B cell (primary cell): ENCODE measurements at regions of chr11 and their contacts with region 1.

Region 1: DNA sequence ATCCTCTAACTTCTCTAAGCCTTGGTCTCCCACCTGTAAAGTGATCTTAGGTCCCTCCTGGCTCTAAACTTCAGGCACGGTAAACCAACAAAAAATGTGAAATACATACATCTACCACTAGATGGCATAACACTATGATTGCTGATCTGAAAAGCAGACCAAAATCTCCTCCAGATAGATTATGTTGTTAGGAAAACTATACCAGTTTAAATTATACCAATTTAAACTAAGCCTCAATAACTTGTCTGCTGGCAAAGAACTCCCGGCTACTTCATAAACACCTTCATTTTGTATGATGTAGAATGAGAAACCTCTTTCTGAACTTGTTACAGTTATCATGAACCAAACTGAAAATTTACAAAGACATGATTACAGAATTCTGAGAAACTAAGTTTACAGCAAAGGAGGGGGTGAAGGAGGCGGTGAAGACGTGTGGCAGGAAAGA is 85.9 kb downstream of the SBF2 start:
- DNase-seq: peak; percentile 71
- ATAC-seq: peak; percentile 62
- H3K4me3 ChIP-seq: no peak overlapping the region
- H3K4me3 Mint-ChIP-seq: no peak overlapping the region
- H3K27ac ChIP-seq: no peak overlapping the region
- H3K27ac Mint-ChIP-seq: no peak overlapping the region
- H3K4me1 ChIP-seq: no peaks in the 10 kb centered on the region
- H3K4me1 Mint-ChIP-seq: peaks cover 5% of the 10 kb centered on the region
- H3K27me3 ChIP-seq: no peaks in the 10 kb centered on the region
- H3K27me3 Mint-ChIP-seq: no peaks in the 10 kb centered on the region
- CTCF ChIP-seq: peak; percentile 87

Region 2: DNA sequence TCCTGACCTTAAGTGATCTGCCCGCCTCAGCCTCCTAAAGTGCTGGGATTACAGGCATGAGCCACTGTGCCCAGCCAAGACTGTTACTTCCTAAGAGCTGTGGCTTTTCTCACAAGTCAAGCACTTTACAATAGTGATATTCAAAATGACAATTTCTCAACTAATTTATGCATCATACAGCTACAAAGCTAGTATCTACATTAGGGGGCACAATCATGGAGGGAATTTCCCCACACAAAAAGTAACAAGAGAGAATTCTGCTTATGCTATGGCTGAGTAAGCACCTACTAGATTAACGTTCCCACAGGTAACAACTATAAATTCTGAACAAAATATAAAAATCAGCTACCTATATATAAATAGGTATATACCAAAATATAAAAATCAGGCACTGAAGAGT is 13.2 kb after region 1 on chr11:
- CTCF ChIA-PET with region 1: interaction called, 14 read pairs
- POLR2A ChIA-PET with region 1: interaction called, 3 read pairs
- intact Hi-C with region 1: no loop called
- DNase-seq: no peak
- ATAC-seq: no peak
- H3K4me3 ChIP-seq: no peak overlapping the region
- H3K4me3 Mint-ChIP-seq: no peak overlapping the region
- H3K27ac ChIP-seq: no peak overlapping the region
- H3K27ac Mint-ChIP-seq: no peak overlapping the region
- H3K4me1 ChIP-seq: peaks cover 0 to 9% of the 10 kb centered on the region in 2 donors
- H3K4me1 Mint-ChIP-seq: peaks cover 2% of the 10 kb centered on the region
- H3K27me3 ChIP-seq: no peaks in the 10 kb centered on the region
- H3K27me3 Mint-ChIP-seq: no peaks in the 10 kb centered on the region
- CTCF ChIP-seq: no peak

Region 3: DNA sequence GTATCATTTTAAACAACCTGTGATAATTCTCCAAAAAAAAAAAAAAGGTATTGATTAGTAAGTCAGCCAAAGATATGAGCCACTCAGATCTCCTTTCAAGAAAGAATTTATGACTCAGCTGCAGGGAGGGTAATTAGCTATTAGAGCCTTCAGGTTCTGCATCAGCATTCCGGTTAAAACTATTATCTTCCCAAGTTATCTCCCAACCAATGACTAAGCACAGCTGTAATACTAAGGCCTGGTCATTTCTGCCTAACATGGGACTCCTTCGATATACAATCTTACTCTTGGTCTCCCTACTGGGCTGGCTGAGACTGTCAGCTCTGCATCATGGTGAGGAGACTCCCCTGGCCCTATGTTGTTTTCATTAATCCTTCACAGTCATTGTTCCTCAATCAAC is 25.4 kb after region 1 on chr11:
- CTCF ChIA-PET with region 1: no interaction called
- POLR2A ChIA-PET with region 1: no interaction called
- intact Hi-C with region 1: no loop called
- DNase-seq: no peak
- ATAC-seq: no peak
- H3K4me3 ChIP-seq: no peak overlapping the region
- H3K4me3 Mint-ChIP-seq: no peak overlapping the region
- H3K27ac ChIP-seq: no peak overlapping the region
- H3K27ac Mint-ChIP-seq: no peak overlapping the region
- H3K4me1 ChIP-seq: no peaks in the 10 kb centered on the region
- H3K4me1 Mint-ChIP-seq: no peaks in the 10 kb centered on the region
- H3K27me3 ChIP-seq: no peaks in the 10 kb centered on the region
- H3K27me3 Mint-ChIP-seq: peaks cover 4% of the 10 kb centered on the region
- CTCF ChIP-seq: no peak

Region 4: DNA sequence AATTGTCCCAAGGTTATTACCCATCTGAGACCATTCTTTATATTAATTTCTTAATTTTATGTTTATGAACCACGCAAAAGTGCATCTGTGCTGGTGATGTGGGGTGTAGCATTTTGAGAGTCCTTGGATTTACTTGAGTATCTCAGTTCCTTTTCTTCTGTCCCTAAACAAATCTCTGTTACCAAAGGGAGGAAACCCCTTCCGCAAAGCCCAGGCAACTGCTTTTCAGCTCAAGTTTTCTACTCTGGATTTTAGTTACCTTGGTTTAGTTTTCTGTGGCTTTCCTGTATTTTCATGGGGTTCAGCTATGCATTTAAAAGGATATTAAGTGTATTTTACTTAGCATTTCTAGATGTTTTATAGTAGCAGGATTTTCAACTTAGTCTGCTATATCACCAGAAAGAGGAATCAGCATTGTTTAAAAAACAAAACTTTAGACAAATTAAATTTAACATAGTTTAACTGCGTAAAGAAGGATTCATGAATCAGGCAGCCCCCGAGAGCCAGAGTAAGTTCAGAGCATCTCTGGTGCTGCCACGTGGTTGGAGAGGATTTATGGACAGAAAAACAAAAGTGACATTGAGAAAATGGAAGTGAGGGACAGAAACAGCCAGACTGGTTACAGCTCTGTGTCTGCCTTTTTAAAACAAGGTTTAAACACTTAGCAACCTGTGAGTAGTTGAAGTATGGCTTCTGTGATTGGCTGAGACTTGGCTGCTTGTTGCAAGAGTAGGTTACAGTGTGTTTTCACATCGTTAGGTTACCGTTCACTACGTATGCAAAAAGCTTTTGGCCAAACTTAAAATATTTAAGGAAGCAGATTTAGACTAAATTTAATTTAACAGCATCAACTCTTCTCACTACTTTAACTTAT is 106.3 kb after region 1 on chr11:
- CTCF ChIA-PET with region 1: interaction called, 187 read pairs
- POLR2A ChIA-PET with region 1: no interaction called
- intact Hi-C with region 1: no loop called
- DNase-seq: peak; percentile 84
- ATAC-seq: peak; percentile 65
- H3K4me3 ChIP-seq: no peak overlapping the region
- H3K4me3 Mint-ChIP-seq: peak overlapping the region; percentile 40
- H3K27ac ChIP-seq: no peak overlapping the region
- H3K27ac Mint-ChIP-seq: no peak overlapping the region
- H3K4me1 ChIP-seq: peaks cover 25 to 26% of the 10 kb centered on the region in 2 donors
- H3K4me1 Mint-ChIP-seq: peaks cover 32% of the 10 kb centered on the region
- H3K27me3 ChIP-seq: no peaks in the 10 kb centered on the region
- H3K27me3 Mint-ChIP-seq: peaks cover 12% of the 10 kb centered on the region
- CTCF ChIP-seq: no peak

Region 5: DNA sequence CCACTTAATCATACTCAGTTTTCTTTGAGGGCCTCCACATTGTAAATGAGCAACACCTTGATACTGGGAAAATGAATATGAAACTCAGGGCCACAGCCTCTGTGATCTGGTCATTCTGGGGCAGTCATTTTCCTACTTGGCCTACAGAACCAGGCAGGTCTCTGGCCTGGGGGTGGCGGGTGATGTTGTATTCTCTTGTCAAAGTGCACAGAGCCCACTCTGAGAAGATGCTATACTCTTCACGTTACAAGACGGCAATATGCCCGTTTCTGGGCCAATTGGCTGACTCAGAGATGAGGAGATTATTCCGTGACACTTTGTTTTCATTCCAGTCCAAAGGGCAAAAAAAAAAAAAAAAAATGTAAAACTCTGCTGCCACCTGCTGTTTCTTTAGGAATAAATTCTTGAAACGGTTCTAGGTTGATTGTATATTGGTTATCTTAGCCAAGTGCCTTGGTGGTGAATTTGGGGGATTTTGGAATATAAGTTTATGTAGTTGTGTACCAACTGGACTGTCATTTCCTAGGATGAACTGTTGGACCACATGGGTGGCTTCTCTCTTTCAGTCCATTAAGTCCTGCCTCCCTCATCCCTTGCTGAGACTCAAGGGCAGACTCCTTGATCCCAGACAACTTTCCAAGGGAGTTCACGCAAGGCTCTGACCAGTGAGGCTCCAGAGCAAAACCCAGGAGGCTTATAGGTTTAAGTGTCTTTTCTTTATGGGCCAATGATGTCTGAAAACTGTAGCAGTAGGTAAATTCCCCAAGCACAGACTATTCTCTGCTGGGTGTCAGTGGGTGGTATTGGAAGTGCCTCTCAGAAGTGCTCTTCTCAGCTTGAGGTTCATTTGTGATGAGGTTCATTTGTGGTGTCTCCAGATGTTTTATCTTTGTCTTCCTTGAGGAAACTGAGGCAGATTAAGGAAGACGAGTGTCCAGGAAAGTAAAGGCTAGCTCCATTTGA is 115.0 kb after region 1 on chr11:
- CTCF ChIA-PET with region 1: interaction called, 53 read pairs
- POLR2A ChIA-PET with region 1: no interaction called
- intact Hi-C with region 1: loop called (anchors 1 kb)
- DNase-seq: peak; percentile 70
- ATAC-seq: peak; percentile 44
- H3K4me3 ChIP-seq: no peak overlapping the region
- H3K4me3 Mint-ChIP-seq: no peak overlapping the region
- H3K27ac ChIP-seq: no peak overlapping the region
- H3K27ac Mint-ChIP-seq: peak overlapping the region; percentile 67
- H3K4me1 ChIP-seq: peaks cover 7 to 14% of the 10 kb centered on the region in 2 donors
- H3K4me1 Mint-ChIP-seq: peaks cover 17% of the 10 kb centered on the region
- H3K27me3 ChIP-seq: peaks cover 0 to 6% (median 0%) of the 10 kb centered on the region in 4 experiments
- H3K27me3 Mint-ChIP-seq: peaks cover 16% of the 10 kb centered on the region
- CTCF ChIP-seq: peak; percentile 76